Aorta (tissue), 5 donors: ENCODE measurements at regions of chr18 and their contacts with region 1.

Region 1: GRCh38 chr18:13726232-13726971 is at the starts of genes FAM210A and RNMT:
- DNase-seq: peak; percentile 98 to 99
- ATAC-seq: peak; percentile 99
- H3K4me3 ChIP-seq: peak within 1 kb of the TSS; percentile 71 to 90
- H3K27ac ChIP-seq: peak within 1 kb of the TSS; percentile 49 to 84
- H3K4me1 ChIP-seq: peaks cover 0 to 3% of the 10 kb centered on the region in 2 donors
- H3K27me3 ChIP-seq: no peaks in the 10 kb centered on the region
- total RNA-seq, gene FAM210A: 12.2 to 14.7 TPM
- total RNA-seq, gene RNMT: 25.3 to 30.2 TPM

Region 2: DNA sequence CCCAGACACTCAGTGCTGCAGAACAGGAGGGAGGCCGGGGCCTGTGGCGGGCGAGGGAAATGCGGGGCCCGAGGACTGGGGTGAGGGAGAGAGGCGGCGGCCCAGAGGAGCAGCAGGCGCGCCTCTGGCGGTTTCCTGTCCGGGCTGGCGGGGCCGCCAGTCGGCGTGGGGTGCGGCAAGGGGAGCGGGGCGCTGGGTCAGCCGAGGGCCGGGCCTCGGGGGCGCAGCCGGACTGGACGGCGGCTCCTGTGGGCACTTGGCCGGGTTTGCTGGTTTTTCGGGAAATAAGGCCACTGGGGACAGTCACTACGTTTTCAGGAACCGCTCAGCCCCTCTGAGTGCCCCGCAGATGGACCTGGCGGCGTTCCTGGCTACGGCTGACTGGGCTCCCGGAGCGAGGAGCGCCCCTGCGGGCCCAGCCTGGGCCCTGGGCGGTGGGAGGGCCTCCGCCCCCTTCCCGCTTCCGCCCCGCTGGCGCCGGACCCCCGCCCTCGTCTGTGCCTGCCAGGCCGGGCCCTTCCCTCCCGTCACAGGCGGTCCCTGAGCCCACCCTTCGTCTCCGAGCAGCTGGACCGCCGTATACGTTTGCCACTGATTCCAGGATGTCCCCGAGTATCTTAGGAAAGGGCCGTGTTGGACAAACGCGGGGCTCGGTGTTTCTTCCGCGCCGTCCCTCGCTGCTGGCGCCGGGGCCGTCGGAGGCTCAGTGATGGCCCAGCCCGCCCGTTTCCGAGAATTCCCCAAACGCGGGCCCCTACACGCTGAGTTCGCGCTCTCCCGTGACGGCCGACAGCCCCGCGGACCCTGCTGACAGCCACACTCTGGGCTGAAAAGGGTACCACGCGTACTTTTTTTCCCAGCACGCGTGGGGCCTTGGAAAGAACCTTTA is 84.6 kb before region 1 on chr18:
- intact Hi-C with region 1: loop called in 1 of 2 experiments (anchors 5 kb)
- DNase-seq: peak in 1 of 2 donors; percentile 79
- ATAC-seq: peak; percentile 76
- H3K4me3 ChIP-seq: no peak overlapping the region
- H3K27ac ChIP-seq: no peak overlapping the region
- H3K4me1 ChIP-seq: no peaks in the 10 kb centered on the region
- H3K27me3 ChIP-seq: no peaks in the 10 kb centered on the region

Region 3: DNA sequence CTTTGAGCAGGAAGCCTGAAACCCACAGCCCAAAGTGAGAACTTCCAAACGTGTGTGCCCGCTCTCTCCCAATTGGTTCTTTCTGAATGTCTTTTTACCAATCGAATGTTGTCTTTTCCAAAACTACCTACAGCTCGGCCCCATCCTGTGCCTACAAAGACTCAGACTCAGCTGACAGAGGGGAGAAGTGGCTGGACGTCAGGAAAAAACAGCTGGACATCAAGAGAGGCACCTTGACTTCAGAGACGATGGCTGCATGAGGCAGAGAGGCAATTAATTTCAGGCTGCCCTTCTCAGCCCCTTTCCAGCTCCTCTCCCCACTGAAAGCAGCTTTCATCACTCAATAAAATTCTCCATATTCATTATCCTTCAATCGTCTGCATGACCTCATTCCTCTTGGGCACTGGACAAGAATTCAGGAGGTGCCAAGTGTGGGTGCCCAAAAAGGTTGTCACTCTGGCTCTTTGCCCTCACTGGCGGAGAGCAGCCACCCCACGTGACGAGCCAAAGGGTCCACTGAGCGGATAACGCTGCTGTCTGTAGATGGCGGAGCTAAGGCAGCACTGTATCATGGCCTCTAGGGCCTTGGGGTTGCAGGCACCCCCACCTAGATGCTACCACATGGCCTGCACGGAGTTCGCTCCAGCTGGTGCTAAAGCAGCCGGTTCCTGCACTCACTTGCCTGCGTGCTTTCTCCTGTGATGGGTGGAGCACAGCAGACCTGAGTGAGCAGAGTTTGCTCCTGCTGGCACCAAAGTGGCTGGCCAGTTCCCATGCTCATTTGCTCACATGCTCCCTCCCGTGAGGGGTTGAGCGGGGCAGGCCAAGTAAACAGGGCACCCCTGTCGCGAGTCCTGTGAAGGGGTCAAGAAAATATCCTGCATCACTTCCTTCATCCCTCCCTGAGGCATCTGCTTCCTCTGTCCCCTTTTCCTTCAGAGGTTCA is 37.9 kb before region 1 on chr18:
- intact Hi-C with region 1: loop called in 1 of 2 experiments (anchors 5 kb)
- DNase-seq: peak; percentile 49 to 79
- ATAC-seq: peak; percentile 56
- H3K4me3 ChIP-seq: no peak overlapping the region
- H3K27ac ChIP-seq: peak overlapping the region in 1 of 2 donors; percentile 13
- H3K4me1 ChIP-seq: peaks cover 0 to 2% of the 10 kb centered on the region in 2 donors
- H3K27me3 ChIP-seq: no peaks in the 10 kb centered on the region